AG04450 (cell line): ENCODE measurements at regions of chr9 and their contacts with region 1.

Region 1: DNA sequence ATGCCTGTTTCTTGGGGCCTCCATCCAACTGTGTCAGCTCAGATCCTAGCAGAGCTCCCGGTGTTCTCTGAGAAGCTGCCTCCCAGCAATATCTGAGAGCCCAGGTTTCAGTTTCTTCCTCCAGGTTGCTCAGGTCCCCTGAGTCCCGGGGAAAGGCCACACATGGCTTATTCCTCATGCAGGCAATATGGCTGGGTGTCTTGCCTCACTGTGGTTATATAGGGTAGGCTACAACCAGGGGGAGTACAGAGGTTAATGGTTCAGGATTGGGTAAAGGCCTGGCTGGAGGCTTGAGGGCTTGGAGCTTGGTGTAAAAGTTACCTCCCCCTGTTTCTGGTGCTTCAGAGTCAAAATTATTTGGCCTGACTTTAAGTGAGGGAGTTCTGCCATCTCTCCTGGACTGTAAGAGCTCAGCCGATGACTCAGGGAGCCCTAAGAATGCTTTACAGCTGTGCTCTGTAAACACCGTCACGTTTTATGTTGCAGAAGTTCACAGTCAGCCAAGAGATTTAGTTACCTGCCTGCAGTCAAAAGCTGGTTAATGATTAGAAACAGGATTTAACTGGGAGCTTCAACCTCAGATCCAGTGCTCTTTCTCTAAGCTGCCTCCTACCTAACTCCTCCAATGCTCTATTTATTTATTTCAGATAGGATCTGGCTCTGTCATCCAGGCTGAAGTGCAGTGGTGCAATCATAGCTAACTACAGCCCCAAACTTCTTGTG is 24.3 kb upstream of the UBAP2 start:
- DNase-seq: peak; percentile 93
- H3K4me3 ChIP-seq: no peak overlapping the region
- H3K27ac ChIP-seq: peak overlapping the region; percentile 91
- H3K27me3 ChIP-seq: no peaks in the 10 kb centered on the region
- CTCF ChIP-seq: no peak

Region 2: GRCh38 chr9:33816327-33817252 is 256.4 kb before region 1 on chr9 and contains the start of gene UBE2R2:
- CTCF ChIA-PET with region 1: interaction called, 31 read pairs
- POLR2A ChIA-PET with region 1: no interaction called
- DNase-seq: peak; percentile 65
- H3K4me3 ChIP-seq: peak within 1 kb of the TSS; percentile 88
- H3K27ac ChIP-seq: peak within 1 kb of the TSS; percentile 91
- H3K27me3 ChIP-seq: no peaks in the 10 kb centered on the region
- CTCF ChIP-seq: no peak
- polyA plus RNA-seq, gene UBE2R2: 38.8 and 42.2 TPM in 2 replicates

Region 3: GRCh38 chr9:33942471-33943083 is 130.5 kb before region 1 on chr9:
- CTCF ChIA-PET with region 1: interaction called, 16 read pairs
- POLR2A ChIA-PET with region 1: no interaction called
- DNase-seq: peak; percentile 72
- H3K4me3 ChIP-seq: no peak overlapping the region
- H3K27ac ChIP-seq: no peak overlapping the region
- H3K27me3 ChIP-seq: no peaks in the 10 kb centered on the region
- CTCF ChIP-seq: peak; percentile 76

Region 4: DNA sequence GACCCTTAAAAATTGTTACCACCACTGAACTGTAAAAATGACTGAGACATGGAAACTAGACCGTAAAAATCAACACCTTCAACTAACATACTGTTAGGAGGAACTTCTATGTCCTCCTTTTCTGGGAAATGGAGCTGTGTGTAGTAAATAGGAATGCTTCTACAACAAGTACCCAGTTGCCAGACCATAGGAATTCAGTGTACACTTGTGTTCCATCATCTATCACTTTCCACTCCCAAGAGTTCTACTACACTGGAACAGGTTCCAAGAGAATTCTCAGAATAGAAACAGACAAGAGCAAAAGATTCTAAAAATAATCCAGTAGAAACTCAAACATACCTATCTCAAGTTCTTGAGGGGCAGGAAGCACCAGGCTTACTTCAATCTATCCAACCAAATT is 48.0 kb before region 1 on chr9:
- CTCF ChIA-PET with region 1: interaction called, 14 read pairs
- POLR2A ChIA-PET with region 1: no interaction called
- DNase-seq: no peak
- H3K4me3 ChIP-seq: no peak overlapping the region
- H3K27ac ChIP-seq: no peak overlapping the region
- H3K27me3 ChIP-seq: no peaks in the 10 kb centered on the region
- CTCF ChIP-seq: no peak

Region 5: DNA sequence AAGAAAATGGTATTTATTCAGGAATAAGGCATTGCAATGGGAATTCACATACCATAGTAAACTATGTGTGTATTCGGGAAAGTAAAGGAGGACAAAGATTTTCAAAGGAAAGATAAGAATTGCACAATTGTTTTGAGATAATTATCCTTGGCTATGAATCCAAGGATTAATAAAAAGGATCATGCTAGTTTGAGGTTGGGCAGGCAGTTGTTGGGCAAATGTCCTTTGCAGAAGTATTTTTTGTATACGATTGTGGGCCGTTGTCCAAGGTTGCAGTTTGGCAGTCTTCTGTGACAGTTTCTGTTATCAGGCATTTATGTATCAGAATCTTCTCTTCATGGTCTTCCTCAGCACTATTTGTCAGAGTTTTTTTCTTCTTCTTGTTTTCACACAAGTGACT is 13.7 kb before region 1 on chr9:
- CTCF ChIA-PET with region 1: interaction called, 14 read pairs
- POLR2A ChIA-PET with region 1: interaction called, 5 read pairs
- DNase-seq: no peak
- H3K4me3 ChIP-seq: no peak overlapping the region
- H3K27ac ChIP-seq: no peak overlapping the region
- H3K27me3 ChIP-seq: peaks cover 3% of the 10 kb centered on the region
- CTCF ChIP-seq: no peak

Region 6: GRCh38 chr9:34139477-34140146 is 66.6 kb after region 1 on chr9:
- CTCF ChIA-PET with region 1: no interaction called
- POLR2A ChIA-PET with region 1: no interaction called
- DNase-seq: peak; percentile 60
- H3K4me3 ChIP-seq: no peak overlapping the region
- H3K27ac ChIP-seq: no peak overlapping the region
- H3K27me3 ChIP-seq: no peaks in the 10 kb centered on the region
- CTCF ChIP-seq: peak; percentile 40

Region 7: DNA sequence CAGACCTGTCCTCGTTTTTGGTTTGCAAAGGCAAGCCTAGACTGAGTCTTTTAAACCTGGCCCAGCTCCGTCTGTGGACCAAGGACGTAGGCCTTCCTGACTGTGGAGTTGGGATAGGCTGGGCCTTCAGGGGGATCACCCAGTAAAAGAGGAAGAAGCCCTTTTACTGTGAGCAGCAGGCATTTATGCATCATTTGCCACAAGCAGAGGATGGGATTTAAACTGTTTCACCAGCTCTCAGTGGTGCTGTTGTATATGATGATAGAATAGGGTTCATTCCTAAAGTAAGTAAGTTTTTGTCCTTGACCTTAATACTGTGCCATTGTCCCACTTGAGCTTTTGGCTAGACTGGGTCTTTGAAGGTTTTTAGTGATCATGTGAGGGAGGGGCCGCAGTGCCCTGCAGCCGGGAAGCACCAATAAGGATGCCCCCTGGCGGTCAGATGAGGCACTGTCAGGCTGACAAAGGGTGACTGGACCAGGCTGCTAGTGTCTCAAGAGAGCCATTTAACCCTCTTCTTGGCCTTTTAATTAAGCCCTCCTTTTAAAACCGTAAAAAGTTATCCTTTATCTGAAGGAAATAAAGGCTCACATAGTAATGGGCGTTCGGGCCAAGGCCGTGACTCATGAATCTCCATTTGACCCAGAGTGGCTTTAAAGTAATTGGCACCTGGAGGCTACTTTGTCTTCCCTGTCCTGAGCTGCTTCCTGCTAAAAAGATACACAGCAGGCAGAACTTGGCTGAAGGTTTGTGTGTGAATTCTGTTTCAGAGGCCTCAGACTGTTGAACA is 179.8 kb after region 1 on chr9:
- CTCF ChIA-PET with region 1: interaction called, 40 read pairs
- POLR2A ChIA-PET with region 1: interaction called, 4 read pairs
- DNase-seq: no peak
- H3K4me3 ChIP-seq: no peak overlapping the region
- H3K27ac ChIP-seq: peak overlapping the region; percentile 32
- H3K27me3 ChIP-seq: no peaks in the 10 kb centered on the region
- CTCF ChIP-seq: peak; percentile 89

Region 8: GRCh38 chr9:34328987-34329832 is 256.2 kb after region 1 on chr9 and contains the starts of genes KIF24 and NUDT2:
- CTCF ChIA-PET with region 1: no interaction called
- POLR2A ChIA-PET with region 1: no interaction called
- DNase-seq: peak; percentile 100
- H3K4me3 ChIP-seq: peak within 1 kb of the TSS; percentile 96
- H3K27ac ChIP-seq: peak within 1 kb of the TSS; percentile 85
- H3K27me3 ChIP-seq: no peaks in the 10 kb centered on the region
- CTCF ChIP-seq: no peak
- polyA plus RNA-seq, gene KIF24: 0.62 and 0.77 TPM in 2 replicates
- polyA plus RNA-seq, gene NUDT2: 41.5 and 44.8 TPM in 2 replicates